ENCODE measurements at regions of chr7 and their contacts with region 1.

Region 1: GRCh38 chr7:113026941-113027340 is 59.7 kb downstream of the GPR85 start:
- DNase-seq: no peak
- ATAC-seq: no peak
- H3K4me3 ChIP-seq: no peak overlapping the region
- H3K27ac ChIP-seq: no peak overlapping the region
- H3K4me1 ChIP-seq: peaks cover 0 to 5% (median 0%) of the 10 kb centered on the region in 12 donors
- H3K27me3 ChIP-seq: no peaks in the 10 kb centered on the region
- CTCF ChIP-seq: no peak
- POLR2A ChIP-seq: no peak

Region 2: GRCh38 chr7:113071465-113071864 is 44.5 kb after region 1 on chr7:
- intact Hi-C with region 1: no loop called
- DNase-seq: no peak
- ATAC-seq: no peak
- H3K4me3 ChIP-seq: no peak overlapping the region
- H3K27ac ChIP-seq: no peak overlapping the region
- H3K4me1 ChIP-seq: peaks cover 0 to 3% (median 0%) of the 10 kb centered on the region in 12 donors
- H3K27me3 ChIP-seq: peaks cover 0 to 1% (median 0%) of the 10 kb centered on the region in 9 donors
- CTCF ChIP-seq: no peak
- POLR2A ChIP-seq: no peak

Region 3: DNA sequence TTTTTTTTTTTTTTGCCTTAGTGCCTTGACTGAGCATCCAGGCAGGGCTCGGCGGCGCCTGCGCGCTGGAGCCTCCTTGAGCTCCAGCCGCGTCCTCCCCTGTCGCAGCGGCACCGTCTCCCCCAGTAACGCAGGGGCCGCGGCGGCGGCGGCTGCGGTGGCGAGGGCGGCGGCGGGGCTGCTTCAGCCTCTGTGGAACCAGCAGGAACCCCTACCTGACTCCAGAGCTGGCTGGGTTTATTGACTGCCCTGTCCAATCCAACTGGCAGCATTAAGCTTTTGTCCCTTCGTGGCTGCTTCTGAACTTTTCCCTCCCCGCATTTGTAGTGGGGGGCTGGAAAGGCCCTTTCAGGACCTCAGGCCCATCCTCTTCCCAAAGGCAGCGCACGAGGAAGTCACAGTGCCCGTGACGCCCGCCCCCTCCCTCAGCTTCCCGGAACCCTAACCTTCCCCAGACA is 59.5 kb after region 1 on chr7 and contains the start of gene GPR85:
- intact Hi-C with region 1: loop called in 1 of 10 experiments (anchors 10 kb)
- DNase-seq: peak; percentile 41 to 78 (median 63)
- ATAC-seq: peak; percentile 42 to 96 (median 92)
- H3K4me3 ChIP-seq: peak within 1 kb of the TSS; percentile 16 to 66 (median 54)
- H3K27ac ChIP-seq: peak within 1 kb of the TSS in 7 of 12 donors; percentile 1 to 73 (median 54)
- H3K4me1 ChIP-seq: peaks cover 0 to 6% (median 0%) of the 10 kb centered on the region in 12 donors
- H3K27me3 ChIP-seq: peaks cover 0 to 25% (median 0%) of the 10 kb centered on the region in 9 donors
- CTCF ChIP-seq: no peak
- POLR2A ChIP-seq: no peak
- total RNA-seq, gene GPR85: 0.16 to 4.5 (median 0.88) TPM in 8 of 9 donors, not detected in the other

Region 4: DNA sequence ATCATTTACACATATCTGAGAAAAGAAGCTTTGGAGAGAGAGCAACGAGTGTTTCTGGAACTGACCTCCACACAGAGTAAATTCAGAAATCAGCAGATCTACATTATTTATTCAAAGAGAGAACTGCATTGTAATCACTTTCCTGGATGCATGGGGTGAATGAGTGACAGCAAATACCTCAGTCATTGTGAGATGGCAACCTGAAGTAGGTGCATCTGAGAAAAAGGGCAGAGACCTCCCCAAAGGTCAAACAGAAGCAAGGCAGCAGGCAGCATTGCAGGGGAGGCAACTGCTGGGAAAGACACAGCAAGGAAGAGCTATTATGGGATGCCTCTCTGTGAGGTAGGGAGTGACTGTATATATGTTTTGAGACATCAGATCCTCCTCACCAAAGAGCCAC is 117.9 kb after region 1 on chr7:
- intact Hi-C with region 1: no loop called
- DNase-seq: no peak
- ATAC-seq: no peak
- H3K4me3 ChIP-seq: no peak overlapping the region
- H3K27ac ChIP-seq: no peak overlapping the region
- H3K4me1 ChIP-seq: no peaks in the 10 kb centered on the region
- H3K27me3 ChIP-seq: no peaks in the 10 kb centered on the region
- CTCF ChIP-seq: no peak
- POLR2A ChIP-seq: no peak